ENCODE measurements at regions of chr14 and their contacts with region 1.

Region 1: DNA sequence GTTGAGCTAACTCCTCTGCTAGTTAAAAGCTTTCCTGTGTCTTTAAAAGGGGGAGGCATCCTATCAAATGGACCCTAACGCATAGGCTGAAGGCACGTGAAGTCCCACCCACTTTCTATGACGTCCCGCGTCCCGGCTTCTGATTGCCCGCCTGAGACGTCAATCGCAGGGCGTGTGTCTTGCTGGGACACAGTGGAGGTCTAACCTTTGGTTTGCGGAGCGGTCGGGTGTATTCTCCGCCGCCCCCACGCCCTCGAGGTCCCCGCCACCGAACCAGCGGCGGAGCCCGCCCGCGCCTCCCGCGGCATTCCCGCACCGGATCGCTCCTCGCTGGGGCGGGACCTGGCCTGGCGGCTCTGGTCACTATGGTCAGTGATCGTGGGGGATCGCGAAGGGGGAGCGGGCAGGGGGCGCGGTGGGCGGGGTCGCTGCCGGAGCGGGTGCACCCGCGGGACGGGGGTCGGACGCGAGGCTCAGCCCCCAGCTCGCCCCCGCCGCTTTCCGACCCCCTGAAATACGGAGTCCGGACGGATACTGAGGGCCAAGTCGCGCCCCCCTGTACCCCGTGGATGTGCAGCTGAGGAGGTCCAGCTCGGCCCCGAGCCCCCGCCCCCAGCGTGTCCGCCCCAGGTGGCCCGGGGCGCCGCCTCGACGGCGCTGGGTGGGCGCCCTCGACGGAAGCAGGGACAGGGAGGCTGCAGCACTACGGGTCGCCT is at the start of gene OTUB2:
- DNase-seq: peak; percentile 100
- CTCF ChIP-seq: no peak

Region 2: DNA sequence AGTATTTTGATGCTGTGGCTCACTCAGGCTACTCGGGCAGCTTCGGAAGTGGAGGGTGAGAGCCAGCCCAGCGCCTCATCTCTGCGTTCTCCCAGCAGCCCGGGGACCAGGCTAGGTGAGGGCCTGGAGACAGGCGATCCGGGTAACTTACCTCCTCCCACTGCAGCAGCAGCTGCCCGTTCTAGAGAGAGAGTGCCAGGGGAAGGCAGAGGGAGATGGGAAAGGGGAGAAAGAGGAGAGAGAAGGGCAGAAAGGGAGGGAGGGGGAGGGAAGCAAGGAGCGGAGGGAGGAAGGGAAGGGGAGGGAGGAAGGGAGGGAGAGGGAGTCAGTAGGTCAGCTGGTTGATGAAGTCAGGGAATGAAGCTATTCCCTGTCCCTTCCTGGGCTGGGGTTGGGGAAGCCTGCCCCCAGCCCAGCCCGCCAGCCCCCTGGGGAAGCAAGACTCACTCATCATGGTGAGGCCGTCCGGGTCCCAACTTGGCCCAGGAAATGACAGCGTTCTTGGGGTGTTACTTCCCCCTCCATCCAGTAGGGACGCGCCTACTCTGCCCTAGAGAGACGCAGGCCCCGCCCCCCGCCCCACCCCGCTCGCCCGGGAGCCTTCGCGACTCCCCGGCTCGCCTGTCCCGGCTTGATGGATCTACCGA is 102.9 kb after region 1 on chr14 and contains the start of gene IFI27L2:
- in situ Hi-C with region 1: loop called (anchors 25 kb)
- DNase-seq: peak; percentile 90
- CTCF ChIP-seq: peak; percentile 22

Measured in GM13977 (cell line).